ENCODE measurements at regions of chr2 and their contacts with region 1.

Region 1: DNA sequence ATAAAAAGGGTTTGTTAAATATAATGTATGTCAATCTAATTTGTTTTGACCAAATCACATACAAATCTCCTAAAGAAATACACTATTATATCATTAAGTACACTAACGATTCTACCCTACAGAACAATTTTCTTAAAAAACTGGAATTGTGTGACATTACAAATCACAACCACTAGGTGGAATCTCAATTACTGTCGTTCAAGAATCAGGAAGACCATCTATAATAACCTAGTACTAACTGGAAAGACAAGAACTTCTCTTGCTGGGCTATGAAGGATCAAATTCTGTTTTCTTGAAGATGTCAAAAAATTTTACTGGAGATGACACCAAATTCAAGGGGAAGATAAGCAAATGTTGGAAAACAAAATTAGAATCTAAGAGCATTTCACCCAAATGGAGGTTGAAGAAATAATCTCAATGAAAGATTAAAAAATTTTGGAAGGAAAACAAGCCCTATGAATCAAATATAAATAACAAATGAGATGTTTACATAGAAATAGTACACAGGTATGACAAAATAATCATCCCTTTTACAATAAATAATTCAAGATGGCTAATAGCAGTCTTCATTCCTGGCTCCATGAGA is 110.9 kb downstream of the STK39 start:
- DNase-seq: no peak
- H3K4me3 Mint-ChIP-seq: no peak overlapping the region
- H3K27ac Mint-ChIP-seq: peak overlapping the region; percentile 97
- H3K4me1 Mint-ChIP-seq: peaks cover 62% of the 10 kb centered on the region
- H3K27me3 Mint-ChIP-seq: no peaks in the 10 kb centered on the region
- CTCF ChIP-seq: peak; percentile 46

Region 2: GRCh38 chr2:168194784-168195522 is 58.5 kb after region 1 on chr2:
- CTCF ChIA-PET with region 1: no interaction called
- intact Hi-C with region 1: loop called (anchors 5 kb)
- DNase-seq: no peak
- H3K4me3 Mint-ChIP-seq: no peak overlapping the region
- H3K27ac Mint-ChIP-seq: peak overlapping the region; percentile 47
- H3K4me1 Mint-ChIP-seq: peaks cover 79% of the 10 kb centered on the region
- H3K27me3 Mint-ChIP-seq: no peaks in the 10 kb centered on the region
- CTCF ChIP-seq: no peak

Region 3: DNA sequence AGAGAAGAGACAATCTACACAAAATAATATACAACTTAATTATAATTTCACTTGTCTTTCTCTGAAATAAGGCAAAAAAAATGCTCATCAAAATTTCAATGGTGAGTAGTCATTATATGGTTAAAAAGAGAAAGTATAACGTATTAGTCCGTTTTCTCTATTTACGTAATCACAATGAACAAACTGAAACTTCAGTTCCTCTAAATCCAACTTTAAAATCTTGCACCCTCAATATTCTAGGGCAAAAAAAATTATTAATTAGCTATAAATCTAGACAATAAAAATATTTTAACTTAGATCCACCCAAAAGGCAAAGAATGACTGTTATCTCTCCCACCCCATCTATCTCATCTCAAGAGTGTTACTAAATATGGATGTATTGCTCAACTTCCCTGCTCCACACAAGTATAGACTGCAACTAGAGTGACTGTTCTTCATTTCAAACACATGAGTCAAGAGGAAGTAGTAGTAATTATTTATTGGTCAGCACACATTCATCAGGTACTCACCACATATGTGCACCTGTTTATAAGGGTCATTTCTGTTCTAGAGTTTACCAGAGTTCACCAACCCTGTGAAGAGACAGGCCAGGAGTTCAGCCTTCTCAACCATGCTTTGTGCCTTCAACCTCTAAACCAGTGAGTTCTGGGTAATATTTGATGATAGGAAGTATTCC is 74.5 kb after region 1 on chr2:
- CTCF ChIA-PET with region 1: interaction called, 3 read pairs
- intact Hi-C with region 1: loop called (anchors 5 kb)
- DNase-seq: no peak
- H3K4me3 Mint-ChIP-seq: peak overlapping the region; percentile 56
- H3K27ac Mint-ChIP-seq: peak overlapping the region; percentile 98
- H3K4me1 Mint-ChIP-seq: peaks cover 86% of the 10 kb centered on the region
- H3K27me3 Mint-ChIP-seq: no peaks in the 10 kb centered on the region
- CTCF ChIP-seq: no peak

Region 4: DNA sequence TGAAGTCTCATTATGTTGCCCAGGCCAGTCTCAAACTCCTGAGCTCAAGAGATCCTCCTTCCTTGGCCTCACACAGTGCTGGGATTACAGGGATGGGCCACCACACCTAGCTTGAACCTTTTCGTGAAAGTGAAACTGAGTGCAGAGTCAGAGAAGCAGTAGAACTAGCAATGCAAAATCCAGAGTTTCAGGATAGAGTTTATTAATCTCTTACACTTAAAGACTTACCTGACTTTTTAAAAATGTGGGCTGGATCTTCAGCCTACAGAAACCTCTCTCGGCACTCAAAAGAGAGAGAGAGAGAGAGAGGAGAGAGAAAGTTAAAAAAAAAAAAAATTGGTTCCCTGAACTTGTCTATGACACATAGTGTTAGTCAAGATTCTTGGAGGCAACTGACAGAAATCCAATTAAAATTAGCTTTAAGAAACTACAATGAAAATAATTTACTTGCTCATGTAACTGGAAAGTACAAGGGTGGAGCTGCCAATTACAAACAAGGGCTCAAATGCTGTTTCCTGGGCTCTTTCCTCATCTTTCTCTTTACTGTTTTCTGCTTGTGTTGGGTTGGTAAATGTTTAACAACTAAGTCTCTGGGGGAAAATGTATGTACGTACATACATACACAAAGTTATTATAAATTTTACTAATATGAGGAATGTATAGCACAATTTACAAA is 221.4 kb after region 1 on chr2:
- CTCF ChIA-PET with region 1: no interaction called
- intact Hi-C with region 1: no loop called
- DNase-seq: no peak
- H3K4me3 Mint-ChIP-seq: no peak overlapping the region
- H3K27ac Mint-ChIP-seq: no peak overlapping the region
- H3K4me1 Mint-ChIP-seq: peaks cover 18% of the 10 kb centered on the region
- H3K27me3 Mint-ChIP-seq: no peaks in the 10 kb centered on the region
- CTCF ChIP-seq: no peak

Region 5: DNA sequence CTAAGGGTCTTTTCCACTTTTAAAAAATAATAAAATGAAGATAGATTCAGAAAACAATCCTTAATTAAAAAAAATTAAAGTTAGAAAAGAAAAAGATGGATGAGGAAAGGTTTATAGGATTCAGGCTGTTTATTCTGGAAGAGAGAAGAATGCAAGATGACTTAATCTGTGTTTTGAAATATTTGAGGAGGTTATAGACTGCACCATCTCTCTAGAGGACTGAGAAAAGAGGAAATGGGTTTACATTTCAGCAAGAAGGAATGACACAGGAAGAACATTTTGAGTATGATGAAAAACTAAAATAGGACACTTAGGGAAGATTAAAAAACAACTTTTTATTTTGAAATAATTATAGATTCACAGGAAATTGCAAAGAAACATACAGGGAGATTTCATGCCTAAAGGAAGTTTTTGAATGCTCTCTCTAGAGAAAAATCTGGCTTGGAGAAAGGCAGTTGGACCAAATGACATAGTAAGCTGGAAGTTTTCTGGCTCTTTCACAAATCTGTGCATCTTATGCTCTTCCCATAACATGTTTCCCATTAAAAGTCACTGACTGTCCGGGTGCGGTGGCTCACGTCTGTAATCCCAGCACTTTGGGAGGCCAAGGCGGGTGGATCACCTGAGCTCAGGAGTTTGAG is 394.6 kb after region 1 on chr2:
- CTCF ChIA-PET with region 1: no interaction called
- intact Hi-C with region 1: no loop called
- DNase-seq: no peak
- H3K4me3 Mint-ChIP-seq: no peak overlapping the region
- H3K27ac Mint-ChIP-seq: no peak overlapping the region
- H3K4me1 Mint-ChIP-seq: peaks cover 25% of the 10 kb centered on the region
- H3K27me3 Mint-ChIP-seq: no peaks in the 10 kb centered on the region
- CTCF ChIP-seq: no peak

Region 6: GRCh38 chr2:168663993-168664392 is 527.5 kb after region 1 on chr2:
- CTCF ChIA-PET with region 1: no interaction called
- intact Hi-C with region 1: no loop called
- DNase-seq: no peak
- H3K4me3 Mint-ChIP-seq: no peak overlapping the region
- H3K27ac Mint-ChIP-seq: no peak overlapping the region
- H3K4me1 Mint-ChIP-seq: peaks cover 7% of the 10 kb centered on the region
- H3K27me3 Mint-ChIP-seq: no peaks in the 10 kb centered on the region
- CTCF ChIP-seq: no peak